Gastrocnemius medialis (tissue), 4 donors: ENCODE measurements at regions of chr3 and their contacts with region 1.

Region 1: DNA sequence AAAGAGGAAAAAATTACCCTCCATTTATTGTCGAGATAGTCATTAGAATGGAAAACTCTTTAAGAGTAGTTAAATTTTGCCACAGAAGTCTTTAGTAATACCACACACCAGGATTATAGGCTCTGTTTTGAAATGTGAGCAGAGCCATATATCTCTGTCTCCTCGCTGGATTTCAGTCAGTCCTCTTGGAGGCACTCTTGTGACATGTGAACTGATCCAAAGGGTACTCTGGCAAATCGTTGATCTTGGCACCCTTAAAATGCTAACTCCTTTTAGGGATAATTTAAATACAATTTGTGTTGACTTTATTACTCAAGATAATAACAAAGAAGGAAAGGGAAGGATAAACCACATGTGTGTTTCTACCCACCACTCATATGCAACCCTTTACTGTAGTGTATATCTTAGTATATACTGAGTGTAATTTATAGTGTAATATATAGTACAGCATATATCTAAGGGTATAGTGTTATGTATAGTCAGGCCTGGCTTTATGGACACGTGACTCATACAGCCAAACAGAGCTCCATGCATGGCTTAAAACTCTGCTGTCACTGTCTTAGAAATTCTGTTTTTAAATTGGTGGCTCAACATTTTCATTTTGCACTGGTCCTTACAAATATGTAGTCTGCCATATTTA is 12.3 kb upstream of the KPNA4 start:
- DNase-seq: peak in 1 of 2 donors; percentile 11
- ATAC-seq: peak; percentile 97 to 98
- H3K4me3 ChIP-seq: peak overlapping the region in 1 of 4 donors; percentile 18
- H3K27ac ChIP-seq: peak overlapping the region; percentile 71 to 86 (median 81)
- H3K4me1 ChIP-seq: peaks cover 21 to 23% of the 10 kb centered on the region in 2 donors
- H3K27me3 ChIP-seq: no peaks in the 10 kb centered on the region
- CTCF ChIP-seq: peak in 1 of 5 experiments; percentile 20
- POLR2A ChIP-seq: no peak

Region 2: DNA sequence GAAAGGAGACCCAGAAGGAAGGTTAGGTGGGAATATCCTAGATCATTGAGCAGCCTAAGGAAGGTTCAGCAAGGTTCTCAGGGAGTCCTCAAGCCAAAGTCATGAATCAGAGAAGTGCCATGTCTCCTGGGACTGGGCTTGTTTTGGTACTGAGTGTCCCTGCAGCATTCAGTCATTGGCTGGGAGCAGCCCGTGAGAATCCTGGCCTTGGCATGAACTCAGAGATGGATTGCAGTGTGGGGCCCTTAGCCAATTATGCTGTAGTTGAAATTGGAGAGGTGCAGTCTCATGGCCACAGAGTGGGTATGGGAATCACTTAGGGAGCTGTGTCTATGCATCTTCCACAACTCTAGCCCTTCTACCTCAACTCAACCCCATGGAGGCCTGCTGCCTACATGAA is 161.4 kb after region 1 on chr3:
- in situ Hi-C with region 1: no loop called
- intact Hi-C with region 1: loop called (anchors 5 kb)
- DNase-seq: peak; percentile 86 to 93
- ATAC-seq: peak; percentile 98
- H3K4me3 ChIP-seq: no peak overlapping the region
- H3K27ac ChIP-seq: peak overlapping the region; percentile 63 to 82 (median 74)
- H3K4me1 ChIP-seq: peaks cover 34 to 42% of the 10 kb centered on the region in 2 donors
- H3K27me3 ChIP-seq: no peaks in the 10 kb centered on the region
- CTCF ChIP-seq: no peak
- POLR2A ChIP-seq: peak in 1 of 2 donors; percentile 19

Region 3: DNA sequence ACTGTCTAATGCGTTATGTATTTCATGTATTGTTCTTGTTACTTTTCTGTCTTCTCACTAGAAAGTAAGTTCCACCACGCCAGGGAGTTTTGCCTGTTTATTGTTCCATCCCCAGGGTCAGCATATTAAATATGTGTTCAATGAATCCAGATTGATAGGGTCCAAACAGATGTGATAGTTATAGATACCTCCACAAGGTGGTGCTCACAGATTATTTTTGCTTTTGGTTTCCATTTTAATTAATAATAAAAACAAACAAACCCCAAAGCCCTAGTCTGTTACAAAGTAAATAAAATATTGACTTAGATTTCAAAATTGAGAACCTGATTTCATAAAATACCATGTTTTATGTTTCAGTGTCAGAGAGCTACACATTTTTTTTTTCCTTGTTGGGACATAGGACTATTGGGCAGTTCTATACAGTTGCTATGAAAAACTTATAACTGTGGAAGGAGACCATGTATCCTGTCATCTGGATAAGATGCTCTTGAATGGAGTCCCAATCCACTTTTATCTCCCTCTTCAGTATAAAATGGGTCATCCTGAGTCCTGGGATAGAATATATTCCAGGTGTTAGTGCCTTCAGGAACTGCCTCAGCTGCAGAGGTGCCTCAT is 931.3 kb after region 1 on chr3:
- in situ Hi-C with region 1: no loop called
- intact Hi-C with region 1: no loop called
- DNase-seq: no peak
- ATAC-seq: no peak
- H3K4me3 ChIP-seq: no peak overlapping the region
- H3K27ac ChIP-seq: no peak overlapping the region
- H3K4me1 ChIP-seq: no peaks in the 10 kb centered on the region
- H3K27me3 ChIP-seq: no peaks in the 10 kb centered on the region
- CTCF ChIP-seq: no peak
- POLR2A ChIP-seq: no peak